ENCODE measurements at regions of chr2 and their contacts with region 1.

Region 1: GRCh38 chr2:180017784-180018183 is 10.7 kb upstream of the CWC22 start:
- DNase-seq: peak; percentile 48
- ATAC-seq: peak; percentile 14; the same call in 1 of the 2 replicates
- H3K4me3 ChIP-seq: no peak overlapping the region
- H3K27ac ChIP-seq: no peak overlapping the region
- H3K4me1 ChIP-seq: peaks cover 16% of the 10 kb centered on the region
- H3K27me3 ChIP-seq: no peaks in the 10 kb centered on the region
- CTCF ChIP-seq: no peak

Region 2: DNA sequence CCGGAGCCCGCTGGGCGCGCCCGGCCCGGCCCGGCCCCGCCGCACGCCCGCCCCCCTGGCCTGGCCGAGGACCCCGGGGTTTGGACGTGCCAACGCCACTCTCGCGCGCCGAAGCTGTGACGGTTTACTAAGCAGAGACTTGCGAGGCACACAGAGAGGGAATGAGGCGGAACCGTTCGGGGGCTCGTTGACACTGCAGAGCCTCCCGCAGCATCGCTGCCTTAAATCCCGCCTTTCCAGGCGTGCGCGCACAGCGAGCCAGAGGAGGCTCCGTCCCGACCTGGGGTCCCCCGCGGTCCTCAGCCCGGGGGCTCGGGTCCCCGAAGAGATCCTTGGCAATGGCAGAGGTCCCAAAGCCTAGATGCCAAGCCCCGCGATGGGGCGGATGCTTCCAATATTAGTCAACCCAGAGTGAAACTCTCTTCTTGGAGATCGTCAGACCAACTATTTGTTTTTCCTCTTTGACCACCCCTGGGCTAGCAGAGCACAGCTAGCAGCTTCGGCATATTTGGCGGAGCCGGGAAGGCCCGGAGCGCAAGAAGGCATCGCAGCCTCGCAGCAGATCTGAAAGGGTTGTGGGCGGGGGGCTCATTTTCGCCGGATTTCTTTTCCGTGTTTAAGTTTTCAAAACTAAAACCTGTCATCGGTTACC is 156.2 kb before region 1 on chr2 and contains the start of gene ZNF385B:
- CTCF ChIA-PET with region 1: no interaction called
- POLR2A ChIA-PET with region 1: no interaction called
- intact Hi-C with region 1: no loop called
- DNase-seq: peak; percentile 37
- ATAC-seq: peak; percentile 62
- H3K4me3 ChIP-seq: peak within 1 kb of the TSS; percentile 83
- H3K27ac ChIP-seq: no peak within 1 kb of the TSS
- H3K4me1 ChIP-seq: peaks cover 4% of the 10 kb centered on the region
- H3K27me3 ChIP-seq: no peaks in the 10 kb centered on the region
- CTCF ChIP-seq: no peak
- total RNA-seq, gene ZNF385B: 0.81 and 2.4 TPM in 2 replicates

Region 3: GRCh38 chr2:180033993-180034894 is 16.5 kb after region 1 on chr2:
- CTCF ChIA-PET with region 1: no interaction called
- POLR2A ChIA-PET with region 1: no interaction called
- intact Hi-C with region 1: loop called (anchors 2 kb)
- DNase-seq: peak; percentile 83
- ATAC-seq: peak; percentile 97
- H3K4me3 ChIP-seq: no peak overlapping the region
- H3K27ac ChIP-seq: peak overlapping the region; percentile 38; the same call in 1 of the 2 replicates
- H3K4me1 ChIP-seq: peaks cover 15% of the 10 kb centered on the region
- H3K27me3 ChIP-seq: no peaks in the 10 kb centered on the region
- CTCF ChIP-seq: no peak

Measured in PC-3 (cell line).